Activated CD4-positive, alpha-beta memory T cell treated with anti-CD3 and anti-CD28 coated beads, Interleukin-2, amount 10 ng/mL, durations not matched to agents 7 days and 5 days (primary cell): ENCODE measurements at regions of chr6 and their contacts with region 1.

Region 1: DNA sequence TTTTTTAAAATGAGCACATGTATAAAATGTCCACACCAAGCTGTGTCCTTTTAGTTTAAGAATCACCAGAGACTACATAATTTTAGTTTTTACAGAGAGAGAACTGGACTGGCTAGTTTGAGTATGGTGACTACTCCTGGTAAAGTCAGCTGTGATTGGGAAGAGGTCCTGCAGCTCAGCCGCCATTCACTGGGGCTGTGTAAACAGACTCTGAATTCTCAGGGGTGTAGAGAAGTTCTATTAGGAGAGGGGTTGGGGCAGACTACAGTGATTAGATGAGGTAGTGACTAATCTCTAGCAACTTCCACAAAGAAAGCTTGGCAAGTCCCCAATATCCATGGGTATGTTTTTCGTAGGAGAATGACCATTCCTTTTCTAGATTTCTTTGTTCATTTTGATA is 341.2 kb upstream of the MAP3K7 start:
- DNase-seq: no peak
- H3K4me3 Mint-ChIP-seq: no peak overlapping the region
- H3K27ac Mint-ChIP-seq: no peak overlapping the region
- H3K4me1 Mint-ChIP-seq: no peaks in the 10 kb centered on the region
- H3K27me3 Mint-ChIP-seq: peaks cover 24% of the 10 kb centered on the region

Region 2: GRCh38 chr6:90940812-90941481 is 12.9 kb after region 1 on chr6:
- CTCF ChIA-PET with region 1: interaction called, 16 read pairs
- POLR2A ChIA-PET with region 1: no interaction called
- DNase-seq: no peak
- H3K4me3 Mint-ChIP-seq: peak overlapping the region; percentile 19
- H3K27ac Mint-ChIP-seq: no peak overlapping the region
- H3K4me1 Mint-ChIP-seq: peaks cover 7% of the 10 kb centered on the region
- H3K27me3 Mint-ChIP-seq: peaks cover 2% of the 10 kb centered on the region